ENCODE measurements at regions of chr16 and their contacts with region 1.

Region 1: GRCh38 chr16:75464130-75464918 is at the start of gene TMEM170A:
- DNase-seq: peak; percentile 94 to 99
- H3K4me3 ChIP-seq: peak within 1 kb of the TSS; percentile 55 to 91 (median 88)
- H3K27ac ChIP-seq: peak within 1 kb of the TSS; percentile 92
- H3K4me1 ChIP-seq: peaks cover 0 to 2% (median 2%) of the 10 kb centered on the region in 4 experiments; a peak in 1 of 7 replicates
- H3K27me3 ChIP-seq: no peaks in the 10 kb centered on the region
- CTCF ChIP-seq: peak; percentile 98 to 100 (median 99)
- EP300 ChIP-seq: peak in 1 of 2 experiments; percentile 15; a peak in 1 of 3 replicates
- POLR2A ChIP-seq: peak; percentile 79 to 98
- RAD21 ChIP-seq: peak; percentile 58 to 76
- total RNA-seq, gene TMEM170A: 52.8 and 56.6 TPM in 2 replicates

Region 2: DNA sequence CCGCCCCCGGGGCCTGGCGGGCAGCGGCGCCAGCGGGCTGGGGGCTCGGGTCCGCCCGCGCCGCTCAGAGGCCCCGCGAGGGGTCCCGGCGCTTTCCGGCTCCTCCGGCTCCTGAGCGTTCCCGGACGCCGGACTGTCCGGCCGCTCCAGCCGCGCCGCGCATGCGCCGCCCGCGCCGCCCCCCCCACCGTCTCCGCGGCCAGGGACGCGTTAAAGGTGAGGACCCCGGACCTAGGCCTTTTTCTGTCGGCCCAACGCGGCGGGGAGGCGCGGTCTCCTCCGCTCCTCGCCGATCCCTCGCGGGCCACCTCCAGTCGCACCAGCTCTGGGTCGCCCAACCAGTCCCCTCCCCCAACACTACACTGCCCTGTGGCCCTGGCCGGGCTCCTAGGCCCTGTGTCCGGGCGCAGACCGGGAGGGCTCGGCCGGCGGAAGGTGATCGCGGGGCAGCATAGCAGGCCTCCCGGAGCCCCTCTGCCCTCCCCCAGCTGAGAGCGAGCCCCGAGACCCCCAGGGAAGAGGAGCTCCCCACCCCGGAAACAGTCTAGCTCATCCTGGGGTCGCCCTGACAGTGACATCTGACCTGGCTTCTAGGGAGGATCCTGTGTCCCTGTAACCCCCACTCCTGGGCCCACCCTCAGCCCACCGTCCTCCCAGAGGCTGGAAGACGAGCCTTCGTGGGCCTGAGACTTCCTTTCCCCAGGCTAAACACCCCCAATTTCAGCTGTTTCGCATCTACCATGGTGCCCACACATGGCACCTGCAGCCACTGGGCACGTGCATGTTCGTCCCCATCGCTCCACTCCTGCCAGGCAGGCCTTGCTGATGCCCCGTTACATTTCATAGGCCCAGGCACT is 198.3 kb before region 1 on chr16:
- CTCF ChIA-PET with region 1: no interaction called
- POLR2A ChIA-PET with region 1: no interaction called
- DNase-seq: peak in 1 of 2 experiments; percentile 93
- H3K4me3 ChIP-seq: peak overlapping the region; percentile 76 to 99 (median 83)
- H3K27ac ChIP-seq: no peak overlapping the region; the same call in 1 of the 2 replicates
- H3K4me1 ChIP-seq: peaks cover 0 to 31% (median 23%) of the 10 kb centered on the region in 4 experiments; a peak in 6 of 7 replicates
- H3K27me3 ChIP-seq: no peaks in the 10 kb centered on the region
- CTCF ChIP-seq: no peak
- EP300 ChIP-seq: no peak
- POLR2A ChIP-seq: peak in 1 of 2 experiments; percentile 65; a peak in 2 of 3 replicates
- RAD21 ChIP-seq: peak; percentile 40 to 44

Region 3: DNA sequence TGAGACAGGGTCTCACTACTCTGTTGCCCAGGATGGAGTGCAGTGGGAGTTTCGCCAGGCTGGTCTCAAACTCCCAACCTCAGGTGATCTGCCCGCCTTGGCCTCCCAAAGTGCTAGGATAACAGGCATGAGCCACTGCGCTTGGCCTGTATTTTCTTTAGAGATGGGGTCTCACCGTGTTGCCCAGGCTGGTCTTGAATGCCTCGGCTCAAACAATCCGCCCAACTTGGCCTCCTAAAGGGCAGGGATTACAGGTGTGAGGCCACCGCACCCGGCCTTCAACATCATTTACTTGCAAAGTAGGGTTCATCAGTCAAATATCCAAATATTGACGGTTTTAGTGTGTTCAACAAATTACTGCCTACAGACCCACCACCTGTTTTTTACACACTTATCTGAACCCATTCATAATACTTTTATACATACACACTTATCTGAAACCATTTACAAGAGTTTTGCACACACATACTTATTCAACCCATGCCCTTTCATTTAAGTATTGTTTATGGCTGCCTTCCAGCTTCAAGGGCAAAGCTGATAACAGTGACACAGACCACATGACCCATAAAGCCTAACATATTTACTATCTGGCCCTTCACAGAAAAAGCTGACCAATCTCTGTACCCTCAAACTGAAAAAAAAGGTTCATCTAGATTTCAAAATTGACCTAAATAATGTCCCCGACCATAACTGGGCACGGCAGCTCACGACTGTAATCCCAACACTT is 11.7 kb before region 1 on chr16:
- CTCF ChIA-PET with region 1: interaction called, 16 read pairs
- POLR2A ChIA-PET with region 1: interaction called, 5 read pairs
- DNase-seq: no peak
- H3K4me3 ChIP-seq: no peak overlapping the region
- H3K27ac ChIP-seq: no peak overlapping the region
- H3K4me1 ChIP-seq: peaks cover 0 to 5% (median 2%) of the 10 kb centered on the region in 4 experiments; a peak in 4 of 7 replicates
- H3K27me3 ChIP-seq: no peaks in the 10 kb centered on the region
- CTCF ChIP-seq: no peak
- EP300 ChIP-seq: no peak
- POLR2A ChIP-seq: no peak
- RAD21 ChIP-seq: no peak

Region 4: GRCh38 chr16:75486676-75487313 is 22.5 kb after region 1 on chr16:
- CTCF ChIA-PET with region 1: interaction called, 127 read pairs
- POLR2A ChIA-PET with region 1: interaction called, 3 read pairs
- DNase-seq: no peak
- H3K4me3 ChIP-seq: no peak overlapping the region
- H3K27ac ChIP-seq: no peak overlapping the region
- H3K4me1 ChIP-seq: no peaks in the 10 kb centered on the region
- H3K27me3 ChIP-seq: no peaks in the 10 kb centered on the region
- CTCF ChIP-seq: no peak
- EP300 ChIP-seq: no peak
- POLR2A ChIP-seq: no peak
- RAD21 ChIP-seq: no peak

Region 5: GRCh38 chr16:75534560-75535205 is 70.4 kb after region 1 on chr16:
- CTCF ChIA-PET with region 1: interaction called, 16 read pairs
- POLR2A ChIA-PET with region 1: no interaction called
- DNase-seq: no peak
- H3K4me3 ChIP-seq: no peak overlapping the region
- H3K27ac ChIP-seq: no peak overlapping the region
- H3K4me1 ChIP-seq: peaks cover 0 to 6% (median 0%) of the 10 kb centered on the region in 4 experiments; a peak in 1 of 7 replicates
- H3K27me3 ChIP-seq: no peaks in the 10 kb centered on the region
- CTCF ChIP-seq: no peak
- EP300 ChIP-seq: no peak
- POLR2A ChIP-seq: no peak
- RAD21 ChIP-seq: no peak

Region 6: GRCh38 chr16:75622761-75623605 is 158.7 kb after region 1 on chr16 and contains the start of gene ADAT1:
- CTCF ChIA-PET with region 1: interaction called, 11 read pairs
- POLR2A ChIA-PET with region 1: no interaction called
- DNase-seq: peak; percentile 91 to 96
- H3K4me3 ChIP-seq: peak within 1 kb of the TSS; percentile 80 to 96 (median 85)
- H3K27ac ChIP-seq: peak within 1 kb of the TSS; percentile 90
- H3K4me1 ChIP-seq: peaks cover 0 to 9% (median 4%) of the 10 kb centered on the region in 4 experiments; a peak in 5 of 7 replicates
- H3K27me3 ChIP-seq: no peaks in the 10 kb centered on the region
- CTCF ChIP-seq: no peak
- EP300 ChIP-seq: peak in 1 of 2 experiments; percentile 12; a peak in 1 of 3 replicates
- POLR2A ChIP-seq: peak; percentile 77 to 94
- RAD21 ChIP-seq: no peak
- total RNA-seq, gene ADAT1: 44.7 and 47.4 TPM in 2 replicates

Measured in H1 (cell line).